Endothelial cell of umbilical vein (primary cell): ENCODE measurements at regions of chr6 and their contacts with region 1.

Region 1: GRCh38 chr6:97186416-97186999 is 96.5 kb downstream of the MMS22L start:
- DNase-seq: peak; percentile 77
- H3K4me3 ChIP-seq: no peak overlapping the region
- H3K27ac ChIP-seq: no peak overlapping the region
- H3K4me1 ChIP-seq: peaks cover 32% of the 10 kb centered on the region
- H3K27me3 ChIP-seq: no peaks in the 10 kb centered on the region
- CTCF ChIP-seq: peak; percentile 77 to 85
- POLR2A ChIP-seq: no peak

Region 2: GRCh38 chr6:96345501-96345900 is 841.0 kb before region 1 on chr6:
- CTCF ChIA-PET with region 1: no interaction called
- POLR2A ChIA-PET with region 1: no interaction called
- dilution Hi-C with region 1: no loop called
- intact Hi-C with region 1: no loop called
- DNase-seq: no peak
- H3K4me3 ChIP-seq: no peak overlapping the region
- H3K27ac ChIP-seq: no peak overlapping the region
- H3K4me1 ChIP-seq: no peaks in the 10 kb centered on the region
- H3K27me3 ChIP-seq: no peaks in the 10 kb centered on the region
- CTCF ChIP-seq: no peak
- POLR2A ChIP-seq: no peak

Region 3: GRCh38 chr6:97068211-97068610 is 118.3 kb before region 1 on chr6:
- CTCF ChIA-PET with region 1: no interaction called
- POLR2A ChIA-PET with region 1: no interaction called
- dilution Hi-C with region 1: no loop called
- intact Hi-C with region 1: loop called (anchors 2 kb)
- DNase-seq: peak; percentile 47
- H3K4me3 ChIP-seq: no peak overlapping the region
- H3K27ac ChIP-seq: no peak overlapping the region
- H3K4me1 ChIP-seq: no peaks in the 10 kb centered on the region
- H3K27me3 ChIP-seq: peaks cover 8 to 25% of the 10 kb centered on the region in 2 experiments
- CTCF ChIP-seq: peak; percentile 14 to 19
- POLR2A ChIP-seq: no peak

Region 4: GRCh38 chr6:97240222-97240621 is 53.7 kb after region 1 on chr6:
- CTCF ChIA-PET with region 1: no interaction called
- POLR2A ChIA-PET with region 1: no interaction called
- dilution Hi-C with region 1: no loop called
- intact Hi-C with region 1: loop called (anchors 1 kb)
- DNase-seq: peak; percentile 90
- H3K4me3 ChIP-seq: no peak overlapping the region
- H3K27ac ChIP-seq: peak overlapping the region; percentile 83
- H3K4me1 ChIP-seq: peaks cover 10% of the 10 kb centered on the region
- H3K27me3 ChIP-seq: no peaks in the 10 kb centered on the region
- CTCF ChIP-seq: no peak
- POLR2A ChIP-seq: no peak

Region 5: DNA sequence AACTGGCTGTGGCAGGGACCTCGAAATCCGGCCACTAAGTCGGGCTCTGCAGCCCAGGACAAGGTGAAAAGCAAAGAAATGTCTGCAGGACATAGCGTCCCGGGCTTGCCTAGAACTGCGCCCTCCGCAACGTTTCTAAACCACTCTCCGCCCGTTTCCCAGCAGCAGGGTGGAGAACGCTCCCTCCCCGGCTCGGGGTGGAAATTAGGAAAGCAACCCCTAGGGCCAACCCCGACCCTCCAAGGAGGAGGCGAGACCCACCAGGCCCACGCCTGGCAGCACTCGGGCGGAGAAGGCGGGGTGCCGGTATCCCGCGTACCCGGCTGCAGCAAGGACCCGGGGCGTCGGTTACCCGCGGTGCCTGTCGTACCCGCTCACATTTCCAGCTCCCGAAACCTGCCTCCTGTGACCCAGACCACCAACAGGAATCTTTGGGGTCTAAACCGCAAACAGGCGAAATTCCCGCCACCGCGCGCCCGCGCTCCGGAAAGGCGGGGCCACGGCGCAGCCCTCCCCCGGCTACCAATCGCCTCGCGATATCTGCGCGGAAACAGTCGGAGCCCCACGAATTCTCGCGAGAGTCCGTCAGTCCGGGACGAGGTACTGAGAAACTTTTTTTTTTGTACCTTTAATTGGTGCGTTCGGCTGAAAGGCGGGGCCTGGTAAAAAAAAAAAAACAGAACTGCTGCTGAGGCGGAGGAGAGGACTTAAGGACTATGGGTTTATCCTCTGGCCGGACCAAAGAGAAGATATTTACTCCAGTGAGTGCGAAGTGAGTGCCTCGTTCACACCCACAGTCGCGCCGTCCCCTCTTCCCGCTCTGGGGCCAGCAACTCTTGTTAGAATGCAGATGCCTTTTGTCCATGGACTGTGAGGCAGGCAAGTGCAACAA is 96.5 kb after region 1 on chr6 and contains the start of gene MMS22L:
- CTCF ChIA-PET with region 1: interaction called, 4 read pairs
- POLR2A ChIA-PET with region 1: interaction called, 3 read pairs
- dilution Hi-C with region 1: no loop called
- intact Hi-C with region 1: loop called (anchors 1 kb)
- DNase-seq: peak; percentile 95
- H3K4me3 ChIP-seq: peak within 1 kb of the TSS; percentile 75 to 93 (median 86)
- H3K27ac ChIP-seq: peak within 1 kb of the TSS; percentile 60
- H3K4me1 ChIP-seq: peaks cover 21% of the 10 kb centered on the region
- H3K27me3 ChIP-seq: no peaks in the 10 kb centered on the region
- CTCF ChIP-seq: no peak
- POLR2A ChIP-seq: no peak
- total RNA-seq, gene MMS22L: 19.3 and 22.7 TPM in 2 replicates

Region 6: GRCh38 chr6:97394160-97394748 is 207.7 kb after region 1 on chr6:
- CTCF ChIA-PET with region 1: interaction called, 15 read pairs
- POLR2A ChIA-PET with region 1: no interaction called
- dilution Hi-C with region 1: no loop called
- intact Hi-C with region 1: loop called (anchors 1 kb)
- DNase-seq: peak; percentile 75
- H3K4me3 ChIP-seq: no peak overlapping the region
- H3K27ac ChIP-seq: no peak overlapping the region
- H3K4me1 ChIP-seq: no peaks in the 10 kb centered on the region
- H3K27me3 ChIP-seq: peaks cover 4 to 5% of the 10 kb centered on the region in 2 experiments
- CTCF ChIP-seq: peak; percentile 71 to 73
- POLR2A ChIP-seq: no peak

Region 7: DNA sequence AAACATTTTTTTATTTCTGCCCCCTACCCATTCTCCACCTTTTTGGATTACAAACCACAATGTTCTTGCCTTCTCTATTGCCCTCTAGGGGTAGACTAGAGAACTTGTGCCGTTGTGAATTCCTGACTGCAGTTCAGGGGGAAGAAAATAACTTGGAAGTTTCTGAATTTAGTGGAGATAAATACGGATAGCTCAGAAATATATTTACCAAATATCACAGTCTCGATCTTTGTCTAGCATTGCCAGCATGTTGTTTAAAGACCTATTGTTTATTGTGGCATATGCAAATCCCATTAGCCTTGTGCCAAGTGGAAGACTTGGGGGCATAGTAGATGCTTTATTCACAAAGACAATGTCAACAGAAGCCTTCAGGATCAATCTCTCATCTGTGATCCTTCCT is 250.6 kb after region 1 on chr6:
- CTCF ChIA-PET with region 1: interaction called, 8 read pairs
- POLR2A ChIA-PET with region 1: no interaction called
- dilution Hi-C with region 1: no loop called
- intact Hi-C with region 1: loop called (anchors 1 kb)
- DNase-seq: peak; percentile 34
- H3K4me3 ChIP-seq: no peak overlapping the region
- H3K27ac ChIP-seq: no peak overlapping the region
- H3K4me1 ChIP-seq: no peaks in the 10 kb centered on the region
- H3K27me3 ChIP-seq: peaks cover 4 to 16% of the 10 kb centered on the region in 2 experiments
- CTCF ChIP-seq: peak; percentile 64 to 69
- POLR2A ChIP-seq: no peak

Region 8: DNA sequence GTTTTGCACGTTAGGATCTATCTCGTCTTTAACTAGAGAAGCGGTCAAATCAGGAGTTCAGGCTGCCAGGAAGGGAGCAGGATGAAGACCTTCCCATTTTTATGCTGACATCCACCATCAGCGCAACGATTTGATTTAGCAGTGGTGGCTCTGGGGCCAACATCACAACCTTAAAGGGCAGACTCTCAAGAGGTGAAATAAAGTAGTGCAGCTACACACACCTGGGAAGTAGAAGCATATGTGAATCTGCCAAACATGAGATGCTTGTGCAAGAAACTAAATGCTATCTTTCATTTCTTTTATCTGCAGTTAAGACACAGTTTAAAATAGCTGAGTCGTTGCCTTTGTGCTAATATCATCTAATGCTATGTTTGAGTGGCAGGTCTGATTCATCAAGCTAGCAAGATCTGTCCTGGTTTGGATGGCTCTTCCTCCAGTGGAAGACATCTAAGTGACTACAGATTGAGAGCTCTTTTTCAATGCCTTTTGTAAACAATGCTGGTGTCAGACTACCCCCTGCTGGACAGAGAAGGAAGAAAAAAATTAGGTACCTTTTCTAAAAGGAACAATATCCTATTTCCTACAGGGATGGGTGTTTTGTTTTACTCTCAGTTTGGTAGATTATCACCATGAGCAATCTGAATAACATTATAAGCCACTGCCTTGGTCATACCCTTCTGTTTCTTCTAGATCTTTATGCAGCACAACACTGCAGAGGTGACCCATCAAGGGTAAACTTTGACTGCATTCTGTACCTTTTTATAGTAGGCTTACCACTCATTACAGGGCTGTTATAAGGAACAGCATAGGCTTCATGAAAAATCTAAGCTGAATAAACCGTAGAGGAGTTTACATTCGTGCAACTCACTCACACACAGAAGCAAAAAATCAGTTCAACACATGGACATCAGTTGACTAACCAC is 1932.9 kb after region 1 on chr6:
- CTCF ChIA-PET with region 1: interaction called, 12 read pairs
- POLR2A ChIA-PET with region 1: no interaction called
- dilution Hi-C with region 1: no loop called
- intact Hi-C with region 1: no loop called
- DNase-seq: peak; percentile 54
- H3K4me3 ChIP-seq: no peak overlapping the region
- H3K27ac ChIP-seq: no peak overlapping the region
- H3K4me1 ChIP-seq: no peaks in the 10 kb centered on the region
- H3K27me3 ChIP-seq: peaks cover 0 to 2% of the 10 kb centered on the region in 2 experiments
- CTCF ChIP-seq: peak; percentile 44 to 49
- POLR2A ChIP-seq: no peak